ENCODE measurements at regions of chr12 and their contacts with region 1.

Region 1: GRCh38 chr12:31728917-31729640 is at the start of gene AMN1:
- DNase-seq: peak; percentile 98
- ATAC-seq: peak; percentile 99
- H3K4me3 ChIP-seq: peak within 1 kb of the TSS; percentile 80 to 88 (median 84)
- H3K27ac ChIP-seq: peak within 1 kb of the TSS; percentile 93
- H3K4me1 ChIP-seq: peaks cover 61% of the 10 kb centered on the region
- H3K27me3 ChIP-seq: no peaks in the 10 kb centered on the region; a peak in 1 of 5 replicates
- CTCF ChIP-seq: peak; percentile 30
- EP300 ChIP-seq: peak; percentile 55 to 57; a peak in 2 of 4 replicates
- POLR2A ChIP-seq: peak; percentile 68 to 72
- RAD21 ChIP-seq: peak; percentile 45; the same call in 1 of the 2 replicates
- total RNA-seq, gene AMN1: 7.5 and 11.3 TPM in 2 replicates

Region 2: GRCh38 chr12:31325877-31326631 is 403.0 kb before region 1 on chr12 and contains the start of gene SINHCAF:
- CTCF ChIA-PET with region 1: no interaction called
- POLR2A ChIA-PET with region 1: no interaction called
- in situ Hi-C with region 1: no loop called
- intact Hi-C with region 1: loop called (anchors 5 kb)
- DNase-seq: peak; percentile 99
- ATAC-seq: peak; percentile 77
- H3K4me3 ChIP-seq: peak within 1 kb of the TSS; percentile 73 to 88 (median 80)
- H3K27ac ChIP-seq: peak within 1 kb of the TSS; percentile 86
- H3K4me1 ChIP-seq: peaks cover 31% of the 10 kb centered on the region
- H3K27me3 ChIP-seq: no peaks in the 10 kb centered on the region; a peak in 2 of 5 replicates
- CTCF ChIP-seq: no peak
- EP300 ChIP-seq: no peak
- POLR2A ChIP-seq: peak; percentile 93 to 99
- RAD21 ChIP-seq: no peak
- total RNA-seq, gene SINHCAF: 97.8 and 132 TPM in 2 replicates

Region 3: GRCh38 chr12:31498424-31498823 is 230.7 kb before region 1 on chr12:
- CTCF ChIA-PET with region 1: no interaction called
- POLR2A ChIA-PET with region 1: no interaction called
- in situ Hi-C with region 1: no loop called
- intact Hi-C with region 1: no loop called
- DNase-seq: no peak
- ATAC-seq: no peak
- H3K4me3 ChIP-seq: no peak overlapping the region
- H3K27ac ChIP-seq: no peak overlapping the region
- H3K4me1 ChIP-seq: no peaks in the 10 kb centered on the region
- H3K27me3 ChIP-seq: no peaks in the 10 kb centered on the region
- CTCF ChIP-seq: no peak
- EP300 ChIP-seq: no peak
- POLR2A ChIP-seq: no peak
- RAD21 ChIP-seq: no peak

Region 4: DNA sequence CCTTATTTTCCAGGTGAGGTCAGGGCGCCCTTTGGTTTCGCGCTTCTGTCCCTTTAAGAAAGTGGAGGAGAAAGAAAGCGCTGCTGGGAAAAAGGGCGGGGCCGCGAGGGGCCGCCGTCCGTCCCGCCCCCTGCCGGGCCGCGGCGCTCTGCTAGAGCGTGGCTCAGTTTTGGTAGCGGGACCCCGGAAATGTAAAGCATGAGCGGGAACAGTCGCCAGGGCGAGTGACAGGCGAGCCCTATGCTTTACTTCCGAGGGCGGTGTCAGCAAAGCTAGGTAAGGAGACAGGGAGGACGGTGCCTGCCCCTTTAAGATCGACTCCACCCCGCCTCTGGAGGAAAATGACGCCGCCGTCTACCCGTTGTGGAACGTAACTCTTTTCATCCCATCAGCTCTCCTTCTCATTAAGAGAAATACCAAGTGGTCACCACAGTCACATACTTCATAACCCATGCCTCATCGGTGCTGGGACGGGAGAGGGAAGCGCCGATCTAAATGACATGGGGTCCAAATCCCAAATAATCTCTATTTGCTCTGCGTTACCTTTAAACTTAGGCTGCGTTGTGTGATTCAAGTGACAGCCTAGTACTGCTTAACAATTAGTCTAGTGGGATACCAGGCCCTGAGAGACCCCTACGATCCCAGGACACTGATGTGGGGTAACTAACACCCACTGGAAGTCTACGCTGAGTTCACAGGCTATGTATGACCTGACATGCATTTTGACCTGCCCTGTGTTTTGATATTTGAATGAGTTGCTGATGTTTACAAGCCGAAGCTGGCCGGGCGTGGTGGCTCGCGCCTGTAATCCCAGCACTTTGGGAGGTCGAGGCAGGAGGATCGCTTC is 69.8 kb before region 1 on chr12 and contains the start of gene ETFBKMT:
- CTCF ChIA-PET with region 1: no interaction called
- POLR2A ChIA-PET with region 1: interaction called, 10 read pairs
- in situ Hi-C with region 1: no loop called
- intact Hi-C with region 1: no loop called
- DNase-seq: peak; percentile 90
- ATAC-seq: peak; percentile 98
- H3K4me3 ChIP-seq: peak within 1 kb of the TSS; percentile 76 to 80 (median 78)
- H3K27ac ChIP-seq: peak within 1 kb of the TSS; percentile 87
- H3K4me1 ChIP-seq: peaks cover 21% of the 10 kb centered on the region
- H3K27me3 ChIP-seq: peaks cover 0 to 8% of the 10 kb centered on the region in 2 experiments; a peak in 2 of 5 replicates
- CTCF ChIP-seq: peak; percentile 55
- EP300 ChIP-seq: no peak
- POLR2A ChIP-seq: peak; percentile 43 to 52; a peak in 2 of 4 replicates
- RAD21 ChIP-seq: peak; percentile 57; the same call in 1 of the 2 replicates
- total RNA-seq, gene ETFBKMT: 0.93 and 1.1 TPM in 2 replicates

Region 5: DNA sequence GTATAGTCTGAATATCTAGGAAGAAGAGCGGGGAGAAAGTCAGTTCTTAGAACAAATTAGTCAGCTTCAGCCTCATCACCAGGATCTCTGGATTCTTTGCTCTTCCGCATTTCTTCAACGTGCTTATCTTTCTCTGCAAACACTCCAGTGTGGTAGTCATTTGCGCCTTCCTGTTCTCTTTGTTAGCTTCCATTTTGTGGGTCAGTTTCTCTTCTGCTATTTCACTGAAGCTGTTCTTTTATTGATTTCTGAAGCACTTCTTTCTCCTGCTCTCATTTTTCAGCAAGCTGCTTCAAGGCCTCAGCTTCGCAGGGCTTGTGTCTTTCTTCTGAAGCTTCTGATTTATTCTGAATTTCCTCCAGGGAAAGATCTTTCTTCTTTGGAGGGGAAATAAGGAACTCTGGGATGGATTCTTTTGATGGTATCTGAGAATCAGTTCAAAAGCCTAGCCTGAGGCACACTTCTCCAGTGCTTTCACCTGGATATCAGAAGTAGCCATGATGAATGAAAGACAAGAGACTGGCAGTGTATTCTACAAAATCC is 13.7 kb before region 1 on chr12:
- CTCF ChIA-PET with region 1: no interaction called
- POLR2A ChIA-PET with region 1: interaction called, 21 read pairs
- in situ Hi-C with region 1: no loop called
- intact Hi-C with region 1: loop called (anchors 2 kb)
- DNase-seq: peak; percentile 76
- ATAC-seq: peak; percentile 85
- H3K4me3 ChIP-seq: peak overlapping the region in 2 of 3 experiments; percentile 13 to 26; a peak in 1 of 6 replicates
- H3K27ac ChIP-seq: peak overlapping the region; percentile 82
- H3K4me1 ChIP-seq: peaks cover 22% of the 10 kb centered on the region
- H3K27me3 ChIP-seq: no peaks in the 10 kb centered on the region
- CTCF ChIP-seq: no peak
- EP300 ChIP-seq: peak in 1 of 2 experiments; percentile 67; a peak in 1 of 4 replicates
- POLR2A ChIP-seq: peak in 1 of 2 experiments; percentile 42; a peak in 1 of 4 replicates
- RAD21 ChIP-seq: no peak

Region 6: GRCh38 chr12:31749024-31749704 is 20.1 kb after region 1 on chr12:
- CTCF ChIA-PET with region 1: no interaction called
- POLR2A ChIA-PET with region 1: interaction called, 21 read pairs
- in situ Hi-C with region 1: no loop called
- intact Hi-C with region 1: loop called (anchors 2 kb)
- DNase-seq: peak; percentile 99
- ATAC-seq: peak; percentile 97
- H3K4me3 ChIP-seq: no peak overlapping the region
- H3K27ac ChIP-seq: peak overlapping the region; percentile 95
- H3K4me1 ChIP-seq: peaks cover 51% of the 10 kb centered on the region
- H3K27me3 ChIP-seq: no peaks in the 10 kb centered on the region
- CTCF ChIP-seq: no peak
- EP300 ChIP-seq: peak; percentile 98
- POLR2A ChIP-seq: no peak
- RAD21 ChIP-seq: peak; percentile 26; the same call in 1 of the 2 replicates

Region 7: GRCh38 chr12:31773867-31774266 is 44.8 kb after region 1 on chr12:
- CTCF ChIA-PET with region 1: no interaction called
- POLR2A ChIA-PET with region 1: interaction called, 12 read pairs
- in situ Hi-C with region 1: no loop called
- intact Hi-C with region 1: loop called (anchors 10 kb)
- DNase-seq: peak; percentile 20
- ATAC-seq: peak; percentile 70
- H3K4me3 ChIP-seq: peak overlapping the region in 1 of 3 experiments; percentile 22; a peak in 1 of 6 replicates
- H3K27ac ChIP-seq: peak overlapping the region; percentile 84
- H3K4me1 ChIP-seq: peaks cover 35% of the 10 kb centered on the region
- H3K27me3 ChIP-seq: no peaks in the 10 kb centered on the region
- CTCF ChIP-seq: no peak
- EP300 ChIP-seq: no peak
- POLR2A ChIP-seq: no peak
- RAD21 ChIP-seq: no peak

Region 8: DNA sequence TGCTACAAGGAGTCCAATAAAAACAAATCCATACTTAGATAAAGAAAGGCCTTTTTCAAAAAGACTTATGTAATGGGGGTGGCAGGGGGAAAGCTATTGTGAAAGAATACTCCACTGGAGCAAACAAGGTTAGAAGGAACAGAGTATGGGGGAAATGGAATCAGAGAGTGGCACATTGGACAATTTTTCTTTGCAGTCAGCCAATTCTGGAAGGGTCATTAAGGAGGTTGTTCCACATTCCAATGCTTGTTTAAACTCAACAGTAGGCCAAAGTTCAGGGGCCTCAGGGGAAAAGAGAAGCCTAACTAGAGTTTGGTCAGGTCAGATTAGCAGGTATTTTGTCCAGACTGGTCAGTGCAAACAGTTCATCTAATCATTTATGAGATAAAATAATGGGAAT is 124.9 kb after region 1 on chr12:
- CTCF ChIA-PET with region 1: no interaction called
- POLR2A ChIA-PET with region 1: no interaction called
- in situ Hi-C with region 1: no loop called
- intact Hi-C with region 1: loop called (anchors 2 kb)
- DNase-seq: peak; percentile 83
- ATAC-seq: peak; percentile 85
- H3K4me3 ChIP-seq: no peak overlapping the region
- H3K27ac ChIP-seq: peak overlapping the region; percentile 14
- H3K4me1 ChIP-seq: peaks cover 20% of the 10 kb centered on the region
- H3K27me3 ChIP-seq: no peaks in the 10 kb centered on the region
- CTCF ChIP-seq: no peak
- EP300 ChIP-seq: peak; percentile 24 to 75; a peak in 3 of 4 replicates
- POLR2A ChIP-seq: no peak
- RAD21 ChIP-seq: no peak

Measured in HepG2 (cell line).